Calu3 (cell line): ENCODE measurements at regions of chrX and their contacts with region 1.

Region 1: DNA sequence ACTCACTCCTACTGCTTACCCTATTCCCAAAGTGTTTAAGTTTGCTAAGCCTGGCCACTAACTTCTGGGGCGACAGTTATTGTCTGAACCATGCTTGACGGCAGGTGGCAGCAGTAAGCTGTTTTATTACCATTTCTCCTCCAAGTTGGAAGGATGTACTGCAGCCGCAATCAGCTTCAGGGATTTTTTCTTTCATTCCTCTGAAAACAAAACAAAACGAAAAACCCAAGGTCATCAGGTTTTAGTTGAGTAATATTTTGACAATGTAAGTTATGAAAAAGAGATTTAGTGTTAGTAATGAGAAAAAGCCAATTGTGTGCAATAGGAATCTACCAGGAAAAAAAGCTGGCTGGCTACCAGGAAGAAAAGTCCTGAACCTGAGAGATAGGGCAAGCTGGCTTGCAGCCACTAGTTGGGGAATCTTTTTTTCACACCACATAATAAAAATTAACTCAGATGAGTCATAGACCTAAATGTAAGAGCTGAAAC is 13.2 kb upstream of the RAB9B start:
- DNase-seq: peak; percentile 79
- H3K4me3 Mint-ChIP-seq: no peak overlapping the region
- H3K27ac Mint-ChIP-seq: peak overlapping the region; percentile 67
- H3K4me1 Mint-ChIP-seq: peaks cover 22% of the 10 kb centered on the region
- H3K27me3 Mint-ChIP-seq: no peaks in the 10 kb centered on the region
- CTCF ChIP-seq: peak; percentile 61

Region 2: DNA sequence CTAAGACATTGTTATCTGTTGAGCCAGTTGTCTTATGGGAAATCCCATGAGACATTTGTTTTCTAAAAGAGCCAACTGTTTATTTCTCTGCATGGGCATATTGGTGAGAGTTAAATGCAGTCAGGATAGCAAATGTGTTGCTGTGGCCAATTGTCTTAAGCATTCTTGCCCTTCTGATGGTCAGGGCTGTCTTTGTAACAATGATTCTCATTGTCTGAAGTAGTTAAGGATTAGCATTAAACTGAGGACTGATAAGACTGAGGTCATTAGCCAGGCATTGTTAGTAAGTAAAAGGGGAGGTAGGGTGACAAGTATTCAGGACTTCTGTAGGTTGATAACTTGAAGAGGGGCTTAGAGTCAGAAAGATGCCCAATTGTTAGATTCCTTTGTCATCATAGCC is 147.5 kb before region 1 on chrX:
- CTCF ChIA-PET with region 1: no interaction called
- intact Hi-C with region 1: no loop called
- DNase-seq: no peak
- H3K4me3 Mint-ChIP-seq: no peak overlapping the region
- H3K27ac Mint-ChIP-seq: no peak overlapping the region
- H3K4me1 Mint-ChIP-seq: peaks cover 10% of the 10 kb centered on the region
- H3K27me3 Mint-ChIP-seq: peaks cover 18% of the 10 kb centered on the region
- CTCF ChIP-seq: no peak

Region 3: GRCh38 chrX:103806862-103807474 is 38.2 kb before region 1 on chrX:
- CTCF ChIA-PET with region 1: no interaction called
- intact Hi-C with region 1: no loop called
- DNase-seq: no peak
- H3K4me3 Mint-ChIP-seq: no peak overlapping the region
- H3K27ac Mint-ChIP-seq: no peak overlapping the region
- H3K4me1 Mint-ChIP-seq: no peaks in the 10 kb centered on the region
- H3K27me3 Mint-ChIP-seq: peaks cover 28% of the 10 kb centered on the region
- CTCF ChIP-seq: no peak

Region 4: DNA sequence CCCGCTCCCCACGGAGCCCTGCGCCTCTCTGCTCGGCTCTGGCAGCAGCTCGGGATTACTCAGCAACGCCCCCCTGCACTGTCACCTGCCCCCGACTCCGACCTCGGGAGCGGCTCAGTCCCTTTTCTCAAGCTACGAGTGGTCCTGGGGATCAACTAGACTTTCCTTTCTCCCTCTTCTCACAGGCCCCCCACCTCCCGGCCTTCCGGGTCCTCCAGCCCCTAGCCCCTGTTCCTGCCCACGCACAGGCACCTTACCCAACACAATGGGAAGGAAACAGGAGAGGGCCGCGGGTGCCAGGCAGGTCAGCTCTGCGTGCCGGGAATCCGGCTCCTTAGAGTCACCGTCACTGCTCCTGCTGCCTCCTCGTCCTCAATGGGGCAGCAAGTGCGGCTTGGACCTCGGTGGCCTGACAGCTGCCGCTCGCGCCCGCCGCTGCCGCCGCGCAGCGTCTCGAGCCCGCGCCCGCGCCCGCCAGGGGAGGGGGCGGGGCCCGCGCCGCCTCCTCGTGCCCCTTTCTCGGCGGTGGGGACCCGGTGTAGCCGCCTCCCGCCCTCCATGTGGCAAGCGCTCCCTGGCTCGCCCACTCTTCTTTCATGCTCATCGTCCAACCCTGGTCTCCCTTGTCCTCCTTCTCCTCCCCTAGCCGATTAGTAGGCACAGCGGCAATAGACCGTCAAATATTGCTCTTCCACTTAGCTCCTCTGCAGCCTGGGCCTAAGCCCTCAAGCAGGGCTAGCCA is 13.2 kb before region 1 on chrX and contains the start of gene RAB9B:
- CTCF ChIA-PET with region 1: interaction called, 11 read pairs
- intact Hi-C with region 1: no loop called
- DNase-seq: peak; percentile 34
- H3K4me3 Mint-ChIP-seq: peak within 1 kb of the TSS; percentile 81
- H3K27ac Mint-ChIP-seq: peak within 1 kb of the TSS; percentile 74
- H3K4me1 Mint-ChIP-seq: peaks cover 10% of the 10 kb centered on the region
- H3K27me3 Mint-ChIP-seq: no peaks in the 10 kb centered on the region
- CTCF ChIP-seq: no peak
- total RNA-seq, gene RAB9B: 1.3 and 1.5 TPM in 2 replicates

Region 5: GRCh38 chrX:103918581-103919269 is 73.5 kb after region 1 on chrX:
- CTCF ChIA-PET with region 1: interaction called, 9 read pairs
- intact Hi-C with region 1: loop called (anchors 2 kb)
- DNase-seq: peak; percentile 69
- H3K4me3 Mint-ChIP-seq: peak overlapping the region; percentile 87
- H3K27ac Mint-ChIP-seq: peak overlapping the region; percentile 17
- H3K4me1 Mint-ChIP-seq: peaks cover 25% of the 10 kb centered on the region
- H3K27me3 Mint-ChIP-seq: no peaks in the 10 kb centered on the region
- CTCF ChIP-seq: no peak

Region 6: GRCh38 chrX:103941201-103941975 is 96.2 kb after region 1 on chrX:
- CTCF ChIA-PET with region 1: interaction called, 24 read pairs
- intact Hi-C with region 1: loop called (anchors 1 kb)
- DNase-seq: peak; percentile 30
- H3K4me3 Mint-ChIP-seq: no peak overlapping the region
- H3K27ac Mint-ChIP-seq: no peak overlapping the region
- H3K4me1 Mint-ChIP-seq: peaks cover 12% of the 10 kb centered on the region
- H3K27me3 Mint-ChIP-seq: no peaks in the 10 kb centered on the region
- CTCF ChIP-seq: no peak

Region 7: DNA sequence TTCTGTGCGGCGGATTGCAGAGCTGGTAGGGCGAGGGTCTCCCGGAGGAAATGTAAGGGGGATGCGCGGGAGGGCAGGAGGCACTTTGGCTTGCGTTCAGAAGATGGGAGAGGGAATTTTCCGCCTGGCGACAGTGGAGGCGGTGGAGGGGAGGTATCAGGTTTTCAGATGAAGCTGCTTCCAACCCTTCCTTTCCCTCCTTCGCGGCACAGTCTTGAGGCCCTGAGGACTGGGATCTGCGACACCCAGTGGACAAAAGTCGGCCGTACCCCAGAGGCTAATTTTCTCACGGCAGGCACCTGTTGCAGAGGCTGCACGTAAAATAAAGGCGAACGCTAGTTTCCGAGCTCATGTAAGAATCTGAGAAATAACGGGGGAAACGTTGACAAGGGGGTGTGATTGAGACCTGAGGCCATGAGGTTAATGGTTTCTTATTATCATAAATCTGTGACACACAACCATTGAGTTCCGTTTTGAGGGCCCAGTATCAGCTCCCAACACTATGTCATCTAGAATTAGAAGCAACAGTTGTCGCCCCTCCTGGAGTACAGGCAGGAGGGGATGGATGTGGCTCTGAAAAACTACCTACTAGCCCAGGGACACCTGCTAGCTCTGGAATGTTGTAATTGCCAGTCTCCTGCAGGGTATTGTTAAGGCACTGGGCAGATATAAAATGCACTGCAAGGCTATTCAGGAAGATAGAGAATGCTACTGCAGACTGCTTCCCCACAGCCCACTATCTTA is 268.2 kb after region 1 on chrX:
- CTCF ChIA-PET with region 1: interaction called, 14 read pairs
- intact Hi-C with region 1: loop called (anchors 5 kb)
- DNase-seq: peak; percentile 69
- H3K4me3 Mint-ChIP-seq: peak overlapping the region; percentile 94
- H3K27ac Mint-ChIP-seq: no peak overlapping the region
- H3K4me1 Mint-ChIP-seq: no peaks in the 10 kb centered on the region
- H3K27me3 Mint-ChIP-seq: peaks cover 84% of the 10 kb centered on the region
- CTCF ChIP-seq: no peak

Region 8: GRCh38 chrX:104136241-104137019 is 291.2 kb after region 1 on chrX:
- CTCF ChIA-PET with region 1: interaction called, 9 read pairs
- intact Hi-C with region 1: loop called (anchors 2 kb)
- DNase-seq: peak; percentile 75
- H3K4me3 Mint-ChIP-seq: peak overlapping the region; percentile 28
- H3K27ac Mint-ChIP-seq: no peak overlapping the region
- H3K4me1 Mint-ChIP-seq: peaks cover 11% of the 10 kb centered on the region
- H3K27me3 Mint-ChIP-seq: no peaks in the 10 kb centered on the region
- CTCF ChIP-seq: peak; percentile 35